ENCODE measurements at regions of chr17 and their contacts with region 1.

Region 1: GRCh38 chr17:48307814-48308411 is 122.1 kb downstream of the SKAP1 start:
- DNase-seq: no peak
- ATAC-seq: peak; percentile 98
- H3K4me3 ChIP-seq: no peak overlapping the region
- H3K27ac ChIP-seq: no peak overlapping the region
- H3K4me1 ChIP-seq: peaks cover 8% of the 10 kb centered on the region; the same call in 1 of the 2 replicates
- H3K27me3 ChIP-seq: no peaks in the 10 kb centered on the region
- CTCF ChIP-seq: peak; percentile 69 to 89 (median 86)
- EP300 ChIP-seq: no peak
- POLR2A ChIP-seq: no peak
- RAD21 ChIP-seq: peak; percentile 66

Region 2: GRCh38 chr17:48283411-48283810 is 24.5 kb before region 1 on chr17:
- CTCF ChIA-PET with region 1: interaction called, 12 read pairs
- POLR2A ChIA-PET with region 1: no interaction called
- RAD21 ChIA-PET with region 1: interaction called, 4 read pairs
- SMC1A ChIA-PET with region 1: interaction called, 4 read pairs
- in situ Hi-C with region 1: no loop called
- intact Hi-C with region 1: no loop called
- DNase-seq: no peak
- ATAC-seq: no peak
- H3K4me3 ChIP-seq: no peak overlapping the region
- H3K27ac ChIP-seq: no peak overlapping the region
- H3K4me1 ChIP-seq: no peaks in the 10 kb centered on the region
- H3K27me3 ChIP-seq: no peaks in the 10 kb centered on the region
- CTCF ChIP-seq: no peak
- EP300 ChIP-seq: no peak
- POLR2A ChIP-seq: no peak
- RAD21 ChIP-seq: no peak

Region 3: GRCh38 chr17:48322060-48322459 is 14.1 kb after region 1 on chr17:
- CTCF ChIA-PET with region 1: interaction called, 8 read pairs
- POLR2A ChIA-PET with region 1: no interaction called
- RAD21 ChIA-PET with region 1: interaction called, 4 read pairs
- SMC1A ChIA-PET with region 1: interaction called, 11 read pairs
- in situ Hi-C with region 1: no loop called
- intact Hi-C with region 1: no loop called
- DNase-seq: no peak
- ATAC-seq: no peak
- H3K4me3 ChIP-seq: no peak overlapping the region
- H3K27ac ChIP-seq: no peak overlapping the region
- H3K4me1 ChIP-seq: no peaks in the 10 kb centered on the region
- H3K27me3 ChIP-seq: no peaks in the 10 kb centered on the region
- CTCF ChIP-seq: peak in 1 of 3 experiments; percentile 5; a peak in 1 of 6 replicates
- EP300 ChIP-seq: no peak
- POLR2A ChIP-seq: no peak
- RAD21 ChIP-seq: no peak

Region 4: DNA sequence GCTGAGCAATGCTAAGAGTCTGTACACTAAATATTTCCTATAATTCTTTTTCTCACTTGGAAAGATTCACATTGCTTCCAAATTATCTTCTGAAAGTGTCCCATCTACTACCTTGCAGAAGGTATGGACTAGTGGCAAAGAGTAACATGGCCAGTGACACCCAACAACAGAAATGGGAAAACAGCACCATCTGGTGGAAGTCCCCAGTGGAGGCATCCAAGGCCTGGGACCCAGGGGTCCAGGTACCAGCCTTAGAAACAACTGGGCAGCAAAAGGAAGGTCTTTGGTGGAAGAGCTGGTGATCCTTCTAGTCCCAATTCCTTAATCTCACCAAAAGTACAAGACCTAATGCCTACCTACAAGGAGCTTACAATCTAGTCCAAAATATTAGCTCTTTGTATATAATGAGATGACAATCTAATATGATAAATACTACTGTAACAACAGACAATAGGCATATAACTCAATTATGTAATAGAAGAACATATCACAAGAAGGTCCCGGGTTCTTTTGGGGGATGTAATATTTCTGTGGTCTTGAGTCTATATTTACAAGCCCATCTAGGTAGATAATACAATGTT is 66.8 kb after region 1 on chr17:
- CTCF ChIA-PET with region 1: interaction called, 12 read pairs
- POLR2A ChIA-PET with region 1: no interaction called
- RAD21 ChIA-PET with region 1: interaction called, 5 read pairs
- SMC1A ChIA-PET with region 1: no interaction called
- in situ Hi-C with region 1: no loop called
- intact Hi-C with region 1: no loop called
- DNase-seq: no peak
- ATAC-seq: peak; percentile 92
- H3K4me3 ChIP-seq: no peak overlapping the region
- H3K27ac ChIP-seq: no peak overlapping the region
- H3K4me1 ChIP-seq: no peaks in the 10 kb centered on the region
- H3K27me3 ChIP-seq: no peaks in the 10 kb centered on the region
- CTCF ChIP-seq: peak; percentile 21 to 64 (median 54); a peak in 5 of 6 replicates
- EP300 ChIP-seq: no peak
- POLR2A ChIP-seq: no peak
- RAD21 ChIP-seq: peak; percentile 63

Region 5: GRCh38 chr17:48586355-48587258 is 278.7 kb after region 1 on chr17:
- CTCF ChIA-PET with region 1: interaction called, 49 read pairs
- POLR2A ChIA-PET with region 1: no interaction called
- RAD21 ChIA-PET with region 1: interaction called, 28 read pairs
- SMC1A ChIA-PET with region 1: interaction called, 34 read pairs
- in situ Hi-C with region 1: no loop called
- intact Hi-C with region 1: no loop called
- DNase-seq: no peak
- ATAC-seq: peak; percentile 59
- H3K4me3 ChIP-seq: peak overlapping the region; percentile 64
- H3K27ac ChIP-seq: no peak overlapping the region
- H3K4me1 ChIP-seq: peaks cover 3% of the 10 kb centered on the region
- H3K27me3 ChIP-seq: peaks cover 0 to 4% of the 10 kb centered on the region in 2 experiments; a peak in 1 of 4 replicates
- CTCF ChIP-seq: no peak
- EP300 ChIP-seq: no peak
- POLR2A ChIP-seq: no peak
- RAD21 ChIP-seq: no peak

Measured in GM12878 (cell line).